AG04450 (cell line): ENCODE measurements at regions of chr2 and their contacts with region 1.

Region 1: GRCh38 chr2:37993143-37993542 is 68.1 kb downstream of the RMDN2 start:
- DNase-seq: no peak
- H3K4me3 ChIP-seq: no peak overlapping the region
- H3K27ac ChIP-seq: no peak overlapping the region
- H3K27me3 ChIP-seq: no peaks in the 10 kb centered on the region
- CTCF ChIP-seq: peak; percentile 35; the same call in 1 of the 2 replicates

Region 2: GRCh38 chr2:37982147-37982582 is 11.0 kb before region 1 on chr2:
- CTCF ChIA-PET with region 1: interaction called, 30 read pairs
- POLR2A ChIA-PET with region 1: no interaction called
- DNase-seq: no peak
- H3K4me3 ChIP-seq: no peak overlapping the region
- H3K27ac ChIP-seq: no peak overlapping the region
- H3K27me3 ChIP-seq: no peaks in the 10 kb centered on the region
- CTCF ChIP-seq: peak; percentile 84

Region 3: GRCh38 chr2:38013158-38013752 is 20.1 kb after region 1 on chr2:
- CTCF ChIA-PET with region 1: interaction called, 12 read pairs
- POLR2A ChIA-PET with region 1: interaction called, 3 read pairs
- DNase-seq: no peak
- H3K4me3 ChIP-seq: no peak overlapping the region
- H3K27ac ChIP-seq: no peak overlapping the region
- H3K27me3 ChIP-seq: no peaks in the 10 kb centered on the region
- CTCF ChIP-seq: no peak